B cell (primary cell): ENCODE measurements at regions of chr9 and their contacts with region 1.

Region 1: DNA sequence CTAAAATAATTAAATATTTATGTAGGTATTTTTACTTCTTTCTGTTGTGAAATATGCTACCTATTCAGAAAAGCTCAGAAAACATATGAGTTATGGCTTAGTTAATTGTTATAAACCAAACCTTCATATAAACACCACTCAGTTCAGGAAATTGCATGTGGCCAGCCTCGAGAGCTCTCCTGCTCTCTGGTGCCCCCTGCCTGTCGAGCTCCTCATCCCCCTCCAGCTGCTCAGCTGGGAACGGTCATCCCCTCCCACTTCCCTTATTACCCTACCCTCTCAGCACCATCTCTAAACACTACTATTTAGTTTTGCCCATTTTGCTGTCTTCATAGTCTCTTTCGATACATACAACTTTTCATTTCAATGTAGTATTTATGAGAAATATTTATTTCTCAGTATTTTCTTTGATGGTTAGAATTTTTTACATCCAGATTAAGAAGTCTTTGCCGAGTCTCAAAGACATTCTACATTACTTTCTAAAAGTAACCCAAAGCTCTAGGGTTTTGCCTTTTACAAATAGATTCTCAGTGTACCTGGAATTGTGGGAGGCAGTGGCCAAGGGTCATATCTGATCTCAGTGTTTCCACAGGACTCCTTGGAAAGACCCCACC is 51.2 kb upstream of the SEMA4D start:
- DNase-seq: peak; percentile 89
- ATAC-seq: peak; percentile 100
- H3K4me3 ChIP-seq: no peak overlapping the region
- H3K4me3 Mint-ChIP-seq: no peak overlapping the region
- H3K27ac ChIP-seq: no peak overlapping the region
- H3K27ac Mint-ChIP-seq: peak overlapping the region; percentile 37
- H3K4me1 ChIP-seq: peaks cover 0 to 4% of the 10 kb centered on the region in 2 donors
- H3K4me1 Mint-ChIP-seq: peaks cover 6% of the 10 kb centered on the region
- H3K27me3 ChIP-seq: no peaks in the 10 kb centered on the region
- H3K27me3 Mint-ChIP-seq: no peaks in the 10 kb centered on the region
- CTCF ChIP-seq: peak; percentile 98

Region 2: GRCh38 chr9:89358985-89359384 is 190.2 kb before region 1 on chr9:
- CTCF ChIA-PET with region 1: interaction called, 13 read pairs
- POLR2A ChIA-PET with region 1: no interaction called
- intact Hi-C with region 1: no loop called
- DNase-seq: no peak
- ATAC-seq: no peak
- H3K4me3 ChIP-seq: no peak overlapping the region
- H3K4me3 Mint-ChIP-seq: no peak overlapping the region
- H3K27ac ChIP-seq: no peak overlapping the region
- H3K27ac Mint-ChIP-seq: no peak overlapping the region
- H3K4me1 ChIP-seq: no peaks in the 10 kb centered on the region
- H3K4me1 Mint-ChIP-seq: no peaks in the 10 kb centered on the region
- H3K27me3 ChIP-seq: no peaks in the 10 kb centered on the region
- H3K27me3 Mint-ChIP-seq: no peaks in the 10 kb centered on the region
- CTCF ChIP-seq: no peak

Region 3: GRCh38 chr9:89388084-89388867 is 160.9 kb before region 1 on chr9:
- CTCF ChIA-PET with region 1: interaction called, 19 read pairs
- POLR2A ChIA-PET with region 1: no interaction called
- intact Hi-C with region 1: no loop called
- DNase-seq: no peak
- ATAC-seq: peak; percentile 53
- H3K4me3 ChIP-seq: no peak overlapping the region
- H3K4me3 Mint-ChIP-seq: no peak overlapping the region
- H3K27ac ChIP-seq: no peak overlapping the region
- H3K27ac Mint-ChIP-seq: peak overlapping the region; percentile 50
- H3K4me1 ChIP-seq: peaks cover 0 to 13% of the 10 kb centered on the region in 2 donors
- H3K4me1 Mint-ChIP-seq: peaks cover 14% of the 10 kb centered on the region
- H3K27me3 ChIP-seq: no peaks in the 10 kb centered on the region
- H3K27me3 Mint-ChIP-seq: no peaks in the 10 kb centered on the region
- CTCF ChIP-seq: no peak

Region 4: DNA sequence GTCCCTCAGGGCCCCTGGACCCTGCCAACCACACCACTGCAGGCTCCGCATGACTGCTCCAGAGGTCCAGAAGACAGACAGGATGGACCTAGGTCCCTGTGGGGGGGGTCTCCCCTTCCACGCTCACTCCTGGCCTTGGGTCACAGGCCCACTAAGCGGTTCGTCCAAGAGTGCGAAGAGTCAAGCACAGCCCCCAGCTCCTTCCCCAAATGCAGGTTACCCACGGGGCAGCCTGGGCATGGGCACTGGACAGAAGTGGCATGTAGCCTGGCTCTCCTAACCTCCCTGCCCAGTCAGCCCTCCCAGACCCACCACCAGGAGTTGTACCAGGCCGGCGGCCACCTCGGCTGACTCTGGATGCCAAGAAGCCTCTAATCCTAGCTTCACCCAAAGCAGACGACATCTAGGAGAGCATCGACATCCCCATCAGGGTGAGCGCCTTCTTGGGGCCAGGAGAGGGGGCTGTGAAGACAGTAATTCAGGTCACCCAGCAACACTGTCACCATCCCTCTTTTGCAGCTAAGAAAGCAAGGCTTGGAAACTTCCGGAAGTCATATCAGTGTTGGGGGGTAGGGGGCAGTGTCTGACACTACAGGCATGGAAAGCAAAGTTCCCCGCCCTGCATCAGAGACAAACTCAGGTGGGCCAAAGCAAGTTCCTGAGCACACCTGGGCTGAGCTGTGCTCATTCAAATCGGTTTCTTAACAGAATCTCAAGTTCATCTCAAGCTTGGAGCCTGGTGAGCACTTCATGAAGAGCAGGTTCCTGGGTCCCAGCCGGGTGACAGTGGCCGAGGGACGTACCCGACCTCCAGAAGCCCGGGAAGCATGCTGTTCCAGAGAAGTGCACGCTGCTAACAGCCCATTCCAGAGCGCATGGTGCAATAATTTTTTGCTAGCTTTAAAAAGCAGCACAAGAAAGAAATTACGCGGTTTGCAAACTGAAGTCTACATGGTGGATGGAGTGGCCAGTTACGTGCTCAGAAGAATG is 119.9 kb before region 1 on chr9:
- CTCF ChIA-PET with region 1: interaction called, 155 read pairs
- POLR2A ChIA-PET with region 1: interaction called, 4 read pairs
- intact Hi-C with region 1: loop called (anchors 1 kb)
- DNase-seq: peak; percentile 70
- ATAC-seq: peak; percentile 29
- H3K4me3 ChIP-seq: no peak overlapping the region
- H3K4me3 Mint-ChIP-seq: no peak overlapping the region
- H3K27ac ChIP-seq: no peak overlapping the region
- H3K27ac Mint-ChIP-seq: peak overlapping the region; percentile 59
- H3K4me1 ChIP-seq: peaks cover 78 to 98% of the 10 kb centered on the region in 2 donors
- H3K4me1 Mint-ChIP-seq: peaks cover 86% of the 10 kb centered on the region
- H3K27me3 ChIP-seq: no peaks in the 10 kb centered on the region
- H3K27me3 Mint-ChIP-seq: no peaks in the 10 kb centered on the region
- CTCF ChIP-seq: peak; percentile 68

Region 5: GRCh38 chr9:89464300-89464901 is 84.7 kb before region 1 on chr9:
- CTCF ChIA-PET with region 1: interaction called, 16 read pairs
- POLR2A ChIA-PET with region 1: no interaction called
- intact Hi-C with region 1: loop called (anchors 1 kb)
- DNase-seq: peak; percentile 32
- ATAC-seq: peak; percentile 37
- H3K4me3 ChIP-seq: peak overlapping the region; percentile 8 to 58 (median 20)
- H3K4me3 Mint-ChIP-seq: peak overlapping the region; percentile 76
- H3K27ac ChIP-seq: peak overlapping the region; percentile 67 to 78
- H3K27ac Mint-ChIP-seq: peak overlapping the region; percentile 78
- H3K4me1 ChIP-seq: peaks cover 72 to 75% of the 10 kb centered on the region in 2 donors
- H3K4me1 Mint-ChIP-seq: peaks cover 90% of the 10 kb centered on the region
- H3K27me3 ChIP-seq: no peaks in the 10 kb centered on the region
- H3K27me3 Mint-ChIP-seq: no peaks in the 10 kb centered on the region
- CTCF ChIP-seq: no peak

Region 6: GRCh38 chr9:89522261-89522958 is 26.7 kb before region 1 on chr9:
- CTCF ChIA-PET with region 1: interaction called, 63 read pairs
- POLR2A ChIA-PET with region 1: no interaction called
- intact Hi-C with region 1: loop called (anchors 1 kb)
- DNase-seq: peak; percentile 88
- ATAC-seq: peak; percentile 94
- H3K4me3 ChIP-seq: peak overlapping the region in 3 of 5 experiments; percentile 5 to 39 (median 29)
- H3K4me3 Mint-ChIP-seq: peak overlapping the region; percentile 75
- H3K27ac ChIP-seq: peak overlapping the region; percentile 79 to 81
- H3K27ac Mint-ChIP-seq: peak overlapping the region; percentile 94
- H3K4me1 ChIP-seq: peaks cover 65 to 89% of the 10 kb centered on the region in 2 donors
- H3K4me1 Mint-ChIP-seq: peaks cover 81% of the 10 kb centered on the region
- H3K27me3 ChIP-seq: no peaks in the 10 kb centered on the region
- H3K27me3 Mint-ChIP-seq: no peaks in the 10 kb centered on the region
- CTCF ChIP-seq: no peak

Region 7: GRCh38 chr9:90349907-90350306 is 800.8 kb after region 1 on chr9:
- CTCF ChIA-PET with region 1: no interaction called
- POLR2A ChIA-PET with region 1: no interaction called
- intact Hi-C with region 1: no loop called
- DNase-seq: no peak
- ATAC-seq: no peak
- H3K4me3 ChIP-seq: no peak overlapping the region
- H3K4me3 Mint-ChIP-seq: no peak overlapping the region
- H3K27ac ChIP-seq: no peak overlapping the region
- H3K27ac Mint-ChIP-seq: no peak overlapping the region
- H3K4me1 ChIP-seq: no peaks in the 10 kb centered on the region
- H3K4me1 Mint-ChIP-seq: no peaks in the 10 kb centered on the region
- H3K27me3 ChIP-seq: peaks cover 0 to 18% (median 6%) of the 10 kb centered on the region in 4 experiments
- H3K27me3 Mint-ChIP-seq: peaks cover 66% of the 10 kb centered on the region
- CTCF ChIP-seq: no peak